PC-9 (cell line): ENCODE measurements at regions of chr4 and their contacts with region 1.

Region 1: GRCh38 chr4:100421361-100421978 is 96.4 kb downstream of the EMCN start:
- DNase-seq: no peak
- H3K4me3 ChIP-seq: no peak overlapping the region
- H3K27ac ChIP-seq: no peak overlapping the region
- H3K4me1 ChIP-seq: no peaks in the 10 kb centered on the region
- H3K27me3 ChIP-seq: no peaks in the 10 kb centered on the region
- CTCF ChIP-seq: peak; percentile 73

Region 2: GRCh38 chr4:100093091-100093866 is 328.2 kb before region 1 on chr4:
- CTCF ChIA-PET with region 1: no interaction called
- POLR2A ChIA-PET with region 1: no interaction called
- intact Hi-C with region 1: loop called (anchors 2 kb)
- DNase-seq: peak; percentile 68 to 85
- H3K4me3 ChIP-seq: no peak overlapping the region
- H3K27ac ChIP-seq: no peak overlapping the region
- H3K4me1 ChIP-seq: peaks cover 8% of the 10 kb centered on the region
- H3K27me3 ChIP-seq: no peaks in the 10 kb centered on the region
- CTCF ChIP-seq: peak; percentile 90

Region 3: DNA sequence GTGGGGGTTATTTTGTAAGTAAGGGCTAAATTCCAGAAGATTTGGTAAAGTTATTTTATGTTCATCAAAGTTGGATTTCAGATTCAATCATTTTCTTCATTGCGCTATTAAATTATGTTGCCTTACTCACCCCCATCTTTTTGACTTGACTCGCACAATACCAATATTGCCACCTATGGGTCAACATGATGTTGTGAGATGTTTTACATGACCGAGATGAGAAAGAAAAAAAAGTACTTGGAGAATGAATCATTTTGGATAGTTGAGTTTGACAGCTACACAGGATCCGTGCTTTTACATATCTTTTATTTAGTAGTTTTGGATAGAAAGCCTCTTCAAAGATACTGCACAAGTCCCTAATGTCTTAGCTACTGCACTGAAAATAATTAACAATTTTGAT is 320.6 kb after region 1 on chr4:
- CTCF ChIA-PET with region 1: interaction called, 3 read pairs
- POLR2A ChIA-PET with region 1: no interaction called
- intact Hi-C with region 1: loop called (anchors 2 kb)
- DNase-seq: peak in 1 of 2 experiments; percentile 38
- H3K4me3 ChIP-seq: no peak overlapping the region
- H3K27ac ChIP-seq: no peak overlapping the region
- H3K4me1 ChIP-seq: peaks cover 14% of the 10 kb centered on the region
- H3K27me3 ChIP-seq: no peaks in the 10 kb centered on the region
- CTCF ChIP-seq: peak; percentile 52

Region 4: DNA sequence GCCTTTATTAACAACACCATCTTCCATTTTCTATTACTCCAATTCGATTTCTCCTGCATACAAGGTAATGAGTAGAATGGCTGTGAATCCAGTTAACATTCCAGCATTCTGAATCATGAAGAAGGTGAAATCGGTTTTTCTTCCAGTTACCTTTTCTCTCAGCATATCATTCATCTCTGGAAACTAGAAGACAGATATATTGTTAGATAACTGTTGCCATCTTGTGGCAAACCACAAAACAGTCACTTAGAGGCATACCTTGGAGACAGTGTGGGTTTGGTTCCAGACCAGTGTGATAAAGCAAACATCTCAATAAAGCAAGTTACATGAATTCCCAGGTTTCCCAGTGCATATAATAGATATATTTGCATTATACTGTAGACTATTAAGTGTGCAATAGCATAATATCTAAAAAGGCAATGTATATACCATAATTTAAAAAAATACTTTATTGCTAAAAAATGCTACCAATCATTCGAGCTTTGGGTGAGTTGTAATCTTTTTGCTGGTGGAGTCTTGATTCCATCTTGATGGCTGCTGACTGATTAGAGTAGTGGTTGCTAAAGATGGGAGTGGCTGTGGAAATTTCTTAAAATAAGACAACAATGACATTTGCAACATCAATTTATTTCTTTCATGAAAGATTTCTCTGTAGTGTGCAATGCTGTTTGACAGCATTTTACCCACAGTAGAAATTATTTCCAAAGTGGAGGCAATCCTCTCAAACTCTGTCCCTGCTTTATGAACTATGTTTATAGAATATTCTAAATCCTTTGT is 1841.7 kb after region 1 on chr4:
- CTCF ChIA-PET with region 1: no interaction called
- POLR2A ChIA-PET with region 1: no interaction called
- intact Hi-C with region 1: loop called (anchors 2 kb)
- DNase-seq: peak; percentile 5 to 70
- H3K4me3 ChIP-seq: no peak overlapping the region
- H3K27ac ChIP-seq: no peak overlapping the region
- H3K4me1 ChIP-seq: no peaks in the 10 kb centered on the region
- H3K27me3 ChIP-seq: no peaks in the 10 kb centered on the region
- CTCF ChIP-seq: peak; percentile 70